ENCODE measurements at regions of chr17 and their contacts with region 1.

Region 1: GRCh38 chr17:68035523-68036303 is at the start of gene KPNA2:
- DNase-seq: peak; percentile 99
- H3K4me3 ChIP-seq: peak within 1 kb of the TSS; percentile 72 to 89
- H3K27ac ChIP-seq: peak within 1 kb of the TSS; percentile 67 to 81
- H3K4me1 ChIP-seq: peaks cover 2 to 8% of the 10 kb centered on the region in 2 experiments; a peak in 3 of 4 replicates
- H3K27me3 ChIP-seq: no peaks in the 10 kb centered on the region
- CTCF ChIP-seq: no peak
- EP300 ChIP-seq: 0 out of 4 replicates have a peak, but pooled peaks of 1 of the 2 experiments have one; percentile 16
- RAD21 ChIP-seq: no peak
- polyA plus RNA-seq, gene KPNA2: 122 and 139 TPM in 2 replicates

Region 2: DNA sequence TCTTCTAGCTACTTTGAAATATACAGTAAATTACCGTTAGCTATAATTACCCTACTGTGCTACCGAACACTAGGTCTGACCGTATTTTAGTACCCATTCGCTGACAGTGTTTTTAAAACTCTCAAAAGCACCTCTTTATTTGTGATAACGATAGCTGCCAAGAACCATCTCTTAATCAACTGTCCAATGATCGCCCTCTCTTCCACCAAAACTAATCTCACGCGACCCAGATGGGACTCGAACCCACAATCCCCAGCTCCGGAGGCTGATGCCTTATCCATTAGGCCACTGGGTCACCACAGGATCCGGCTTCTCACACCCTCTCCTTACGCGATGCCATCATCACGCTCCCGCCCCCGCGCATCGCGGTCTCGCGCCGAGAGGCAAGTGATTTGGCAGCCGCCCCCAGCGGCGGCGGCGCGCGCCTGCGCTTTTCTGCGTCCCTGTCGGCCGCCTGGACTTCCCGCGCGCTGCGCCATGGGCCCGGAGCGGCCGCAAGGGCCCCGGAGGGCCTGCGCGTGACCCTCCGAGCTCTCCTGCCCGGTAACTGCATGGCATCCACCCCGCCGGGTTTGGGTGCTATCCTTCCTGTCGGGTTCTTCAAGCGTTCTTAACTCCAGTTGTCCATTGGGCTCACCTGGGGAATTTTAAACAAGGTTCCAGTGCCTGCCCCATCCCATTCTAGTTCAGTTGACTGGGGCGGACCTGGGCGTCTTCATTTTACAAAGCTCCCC is 15.9 kb before region 1 on chr17:
- CTCF ChIA-PET with region 1: interaction called, 3 read pairs
- POLR2A ChIA-PET with region 1: interaction called, 21 read pairs
- DNase-seq: peak; percentile 99
- H3K4me3 ChIP-seq: peak overlapping the region; percentile 54 to 74
- H3K27ac ChIP-seq: peak overlapping the region; percentile 49 to 71
- H3K4me1 ChIP-seq: no peaks in the 10 kb centered on the region; a peak in 1 of 4 replicates
- H3K27me3 ChIP-seq: no peaks in the 10 kb centered on the region
- CTCF ChIP-seq: peak; percentile 42
- EP300 ChIP-seq: peak in 1 of 2 experiments; percentile 74; a peak in 3 of 4 replicates
- RAD21 ChIP-seq: no peak